A673 (cell line): ENCODE measurements at regions of chr3 and their contacts with region 1.

Region 1: DNA sequence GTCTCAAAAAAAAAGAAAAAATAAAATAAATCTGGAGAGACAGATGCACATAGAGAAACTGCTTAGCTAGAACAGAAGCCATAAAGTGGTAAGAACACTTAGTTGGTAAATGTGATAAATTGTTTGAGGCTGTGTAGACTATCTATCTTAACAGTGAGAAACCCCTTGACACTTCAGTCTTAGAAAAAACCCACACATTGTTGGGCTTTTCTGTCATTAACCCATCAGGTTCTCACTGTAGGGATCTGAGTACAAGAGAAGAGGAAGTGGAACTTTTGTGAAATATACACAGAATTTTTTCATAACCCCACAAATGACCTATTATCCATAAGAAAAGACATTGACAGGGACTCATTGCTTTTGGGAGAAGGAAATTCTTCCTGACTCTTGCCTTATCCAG is 24.4 kb downstream of the TP63 start:
- DNase-seq: no peak
- H3K4me3 ChIP-seq: no peak overlapping the region
- H3K27ac ChIP-seq: no peak overlapping the region
- H3K4me1 ChIP-seq: no peaks in the 10 kb centered on the region
- H3K27me3 ChIP-seq: no peaks in the 10 kb centered on the region
- CTCF ChIP-seq: no peak

Region 2: GRCh38 chr3:189641776-189642175 is 13.8 kb before region 1 on chr3:
- CTCF ChIA-PET with region 1: no interaction called
- POLR2A ChIA-PET with region 1: no interaction called
- intact Hi-C with region 1: loop called (anchors 2 kb)
- DNase-seq: no peak
- H3K4me3 ChIP-seq: no peak overlapping the region
- H3K27ac ChIP-seq: no peak overlapping the region
- H3K4me1 ChIP-seq: no peaks in the 10 kb centered on the region
- H3K27me3 ChIP-seq: no peaks in the 10 kb centered on the region
- CTCF ChIP-seq: no peak